Activated CD4-positive, alpha-beta memory T cell treated with anti-CD3 and anti-CD28 coated beads for 36 hours (primary cell): ENCODE measurements at regions of chrX and their contacts with region 1.

Region 1: GRCh38 chrX:49191033-49191871 is 5.1 kb upstream of the PRICKLE3 start:
- DNase-seq: peak; percentile 91
- H3K4me3 Mint-ChIP-seq: peak overlapping the region; percentile 92
- H3K27ac Mint-ChIP-seq: peak overlapping the region; percentile 91
- H3K4me1 Mint-ChIP-seq: peaks cover 37% of the 10 kb centered on the region
- H3K27me3 Mint-ChIP-seq: no peaks in the 10 kb centered on the region

Region 2: DNA sequence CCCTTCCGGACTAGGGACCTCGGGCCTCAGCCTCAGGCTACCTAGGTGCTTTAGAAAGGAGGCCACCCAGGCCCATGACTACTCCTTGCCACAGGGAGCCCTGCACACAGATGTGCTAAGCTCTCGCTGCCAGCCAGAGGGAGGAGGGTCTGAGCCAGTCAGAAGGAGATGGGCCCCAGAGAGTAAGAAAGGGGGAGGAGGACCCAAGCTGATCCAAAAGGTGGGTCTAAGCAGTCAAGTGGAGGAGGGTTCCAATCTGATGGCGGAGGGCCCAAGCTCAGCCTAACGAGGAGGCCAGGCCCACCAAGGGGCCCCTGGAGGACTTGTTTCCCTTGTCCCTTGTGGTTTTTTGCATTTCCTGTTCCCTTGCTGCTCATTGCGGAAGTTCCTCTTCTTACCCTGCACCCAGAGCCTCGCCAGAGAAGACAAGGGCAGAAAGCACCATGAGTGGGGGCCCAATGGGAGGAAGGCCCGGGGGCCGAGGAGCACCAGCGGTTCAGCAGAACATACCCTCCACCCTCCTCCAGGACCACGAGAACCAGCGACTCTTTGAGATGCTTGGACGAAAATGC is 507.8 kb before region 1 on chrX and contains the start of gene WAS:
- CTCF ChIA-PET with region 1: no interaction called
- POLR2A ChIA-PET with region 1: no interaction called
- intact Hi-C with region 1: no loop called
- DNase-seq: peak; percentile 67
- H3K4me3 Mint-ChIP-seq: peak within 1 kb of the TSS; percentile 92
- H3K27ac Mint-ChIP-seq: peak within 1 kb of the TSS; percentile 97
- H3K4me1 Mint-ChIP-seq: peaks cover 55% of the 10 kb centered on the region
- H3K27me3 Mint-ChIP-seq: no peaks in the 10 kb centered on the region
- total RNA-seq, gene WAS: 95.2 to 99.6 TPM

Region 3: DNA sequence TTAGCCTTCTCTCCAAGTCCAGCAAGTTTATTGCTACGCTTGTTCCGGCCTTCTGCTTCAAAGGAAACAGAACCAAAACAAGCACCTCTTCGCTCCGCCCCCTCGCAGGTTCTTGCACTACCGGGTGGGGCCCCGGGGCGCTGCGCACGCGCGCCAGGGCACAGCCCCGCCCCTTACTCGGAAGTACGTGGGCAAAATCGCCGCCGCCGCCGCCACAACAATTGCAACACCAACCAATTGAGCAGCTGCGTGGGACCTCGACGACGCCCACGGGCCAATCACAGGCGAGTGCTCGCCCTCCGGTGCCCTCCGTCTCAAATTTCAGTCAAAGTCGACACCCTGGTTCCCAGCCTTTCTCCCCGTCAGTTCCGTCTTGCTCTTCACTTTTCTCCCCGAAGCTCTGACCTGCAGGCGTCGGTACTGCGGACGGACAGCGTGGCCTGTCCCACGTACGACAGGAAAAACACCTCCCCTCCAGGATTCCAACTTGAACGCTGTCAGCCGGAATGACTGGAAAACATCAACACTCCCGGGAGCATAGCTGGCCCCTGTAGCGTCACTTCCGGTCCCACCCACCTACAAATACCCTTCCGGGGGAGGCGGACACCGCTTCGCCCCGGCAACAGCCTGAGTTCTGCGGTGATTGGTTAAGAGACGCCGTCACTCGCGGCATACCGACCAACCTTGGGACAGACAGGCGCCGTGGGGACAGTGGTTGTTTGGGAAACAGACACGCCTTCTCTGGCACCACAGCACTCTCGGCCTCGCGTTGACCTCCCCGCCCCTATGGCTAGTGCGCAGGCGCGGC is 233.2 kb before region 1 on chrX:
- CTCF ChIA-PET with region 1: no interaction called
- POLR2A ChIA-PET with region 1: no interaction called
- intact Hi-C with region 1: loop called (anchors 10 kb)
- DNase-seq: peak; percentile 95
- H3K4me3 Mint-ChIP-seq: peak overlapping the region; percentile 99
- H3K27ac Mint-ChIP-seq: peak overlapping the region; percentile 100
- H3K4me1 Mint-ChIP-seq: peaks cover 32% of the 10 kb centered on the region
- H3K27me3 Mint-ChIP-seq: no peaks in the 10 kb centered on the region

Region 4: GRCh38 chrX:49029876-49030275 is 161.4 kb before region 1 on chrX:
- CTCF ChIA-PET with region 1: no interaction called
- POLR2A ChIA-PET with region 1: no interaction called
- intact Hi-C with region 1: no loop called
- DNase-seq: no peak
- H3K4me3 Mint-ChIP-seq: no peak overlapping the region
- H3K27ac Mint-ChIP-seq: no peak overlapping the region
- H3K4me1 Mint-ChIP-seq: no peaks in the 10 kb centered on the region
- H3K27me3 Mint-ChIP-seq: no peaks in the 10 kb centered on the region

Region 5: DNA sequence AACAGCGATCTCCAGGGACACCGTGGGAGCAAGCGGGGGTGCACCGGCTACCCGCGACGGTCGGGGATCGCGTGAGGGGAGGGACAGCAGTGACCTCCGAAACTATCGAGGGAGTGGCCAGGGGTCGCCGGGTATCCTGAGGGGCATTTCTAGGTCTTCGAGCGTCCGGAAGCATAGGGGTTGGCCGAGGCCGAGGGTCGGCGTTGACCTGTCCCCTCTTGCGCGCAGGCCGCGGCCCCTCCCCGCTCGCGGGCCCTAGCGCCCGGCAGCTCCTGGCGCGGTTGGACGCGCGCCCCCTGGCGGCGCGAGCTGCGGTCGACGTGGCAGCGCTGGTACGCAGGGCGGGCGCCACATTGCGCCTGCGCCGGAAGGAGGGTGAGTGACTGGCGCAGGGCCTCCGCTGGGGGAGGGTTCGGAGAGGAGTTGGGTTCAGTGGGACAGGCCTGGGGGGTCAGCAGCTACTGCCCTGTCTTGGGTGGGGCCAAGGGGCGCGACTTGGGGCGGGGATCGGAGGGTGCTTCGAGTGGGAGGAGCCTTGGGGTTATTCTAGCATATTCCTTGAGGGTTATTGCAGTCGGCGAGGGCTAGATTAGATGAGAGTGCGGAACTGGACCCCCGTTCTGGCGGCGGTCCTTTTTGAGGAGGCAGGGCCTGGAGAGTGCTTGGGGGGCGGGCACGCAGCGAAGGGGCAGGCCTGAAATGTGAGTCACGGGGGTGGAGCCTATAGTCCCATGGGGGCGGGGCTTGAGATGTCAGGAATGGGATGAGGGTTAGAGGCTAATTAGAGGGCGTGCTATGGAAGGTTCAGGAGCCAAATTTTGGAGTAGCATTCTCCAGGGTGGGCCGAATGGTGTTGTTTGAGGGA is 27.5 kb before region 1 on chrX:
- CTCF ChIA-PET with region 1: interaction called, 23 read pairs
- POLR2A ChIA-PET with region 1: interaction called, 11 read pairs
- intact Hi-C with region 1: loop called (anchors 1 kb)
- DNase-seq: peak; percentile 86
- H3K4me3 Mint-ChIP-seq: peak overlapping the region; percentile 78
- H3K27ac Mint-ChIP-seq: peak overlapping the region; percentile 95
- H3K4me1 Mint-ChIP-seq: peaks cover 24% of the 10 kb centered on the region
- H3K27me3 Mint-ChIP-seq: no peaks in the 10 kb centered on the region

Region 6: GRCh38 chrX:49230469-49231232 is 39.4 kb after region 1 on chrX:
- CTCF ChIA-PET with region 1: interaction called, 3 read pairs
- POLR2A ChIA-PET with region 1: no interaction called
- intact Hi-C with region 1: loop called (anchors 1 kb)
- DNase-seq: peak; percentile 81
- H3K4me3 Mint-ChIP-seq: peak overlapping the region; percentile 69
- H3K27ac Mint-ChIP-seq: peak overlapping the region; percentile 75
- H3K4me1 Mint-ChIP-seq: peaks cover 14% of the 10 kb centered on the region
- H3K27me3 Mint-ChIP-seq: no peaks in the 10 kb centered on the region

Region 7: GRCh38 chrX:49754233-49754857 is 563.1 kb after region 1 on chrX:
- CTCF ChIA-PET with region 1: interaction called, 13 read pairs
- POLR2A ChIA-PET with region 1: no interaction called
- intact Hi-C with region 1: loop called (anchors 2 kb)
- DNase-seq: peak; percentile 56
- H3K4me3 Mint-ChIP-seq: no peak overlapping the region
- H3K27ac Mint-ChIP-seq: no peak overlapping the region
- H3K4me1 Mint-ChIP-seq: no peaks in the 10 kb centered on the region
- H3K27me3 Mint-ChIP-seq: no peaks in the 10 kb centered on the region